GM10248 (cell line): ENCODE measurements at regions of chr9 and their contacts with region 1.

Region 1: GRCh38 chr9:5437254-5438216 is at the start of gene PLGRKT:
- DNase-seq: peak; percentile 90
- CTCF ChIP-seq: peak; percentile 17

Region 2: DNA sequence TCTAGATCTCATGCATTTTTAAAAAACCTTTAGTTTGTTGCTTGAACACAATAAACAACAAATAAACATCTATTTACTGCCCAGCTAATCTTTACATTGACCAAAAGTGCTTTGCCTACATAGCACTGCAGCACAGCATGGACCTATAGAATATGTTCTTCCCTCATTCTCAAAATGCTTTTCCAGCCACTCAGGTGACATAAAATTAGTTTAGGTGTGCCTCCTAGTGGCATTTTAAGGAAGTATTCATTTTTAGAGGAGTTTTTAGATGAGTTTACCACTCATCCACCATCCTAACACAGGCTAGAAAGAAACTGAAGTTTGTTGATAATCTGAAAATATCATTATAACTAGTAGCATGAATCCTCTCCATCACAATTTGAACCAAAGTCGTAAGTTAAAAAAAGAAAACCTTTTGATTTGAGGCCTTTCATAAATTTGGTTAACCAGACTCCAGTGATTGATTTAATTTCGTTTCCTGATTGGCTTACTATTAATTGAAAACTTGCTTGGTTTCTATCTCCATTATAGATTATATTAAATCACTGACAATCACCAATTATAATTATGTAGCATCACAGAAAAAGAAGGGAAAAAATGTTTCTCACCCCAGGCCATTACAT is 12.4 kb before region 1 on chr9:
- CTCF ChIA-PET with region 1: interaction called, 12 read pairs
- POLR2A ChIA-PET with region 1: no interaction called
- DNase-seq: peak; percentile 32
- CTCF ChIP-seq: peak; percentile 29

Region 3: DNA sequence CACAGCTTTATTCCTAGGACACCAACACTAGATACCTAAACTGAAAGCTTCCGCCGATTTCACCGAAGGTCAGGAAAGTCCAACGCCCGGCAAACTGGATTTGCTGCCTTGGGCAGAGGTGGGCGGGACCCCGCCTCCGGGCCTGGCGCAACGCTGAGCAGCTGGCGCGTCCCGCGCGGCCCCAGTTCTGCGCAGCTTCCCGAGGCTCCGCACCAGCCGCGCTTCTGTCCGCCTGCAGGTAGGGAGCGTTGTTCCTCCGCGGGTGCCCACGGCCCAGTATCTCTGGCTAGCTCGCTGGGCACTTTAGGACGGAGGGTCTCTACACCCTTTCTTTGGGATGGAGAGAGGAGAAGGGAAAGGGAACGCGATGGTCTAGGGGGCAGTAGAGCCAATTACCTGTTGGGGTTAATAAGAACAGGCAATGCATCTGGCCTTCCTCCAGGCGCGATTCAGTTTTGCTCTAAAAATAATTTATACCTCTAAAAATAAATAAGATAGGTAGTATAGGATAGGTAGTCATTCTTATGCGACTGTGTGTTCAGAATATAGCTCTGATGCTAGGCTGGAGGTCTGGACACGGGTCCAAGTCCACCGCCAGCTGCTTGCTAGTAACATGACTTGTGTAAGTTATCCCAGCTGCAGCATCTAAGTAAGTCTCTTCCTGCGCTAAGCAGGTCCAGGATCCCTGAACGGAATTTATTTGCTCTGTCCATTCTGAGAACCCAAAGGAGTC is 13.0 kb after region 1 on chr9 and contains the start of gene CD274:
- CTCF ChIA-PET with region 1: interaction called, 39 read pairs
- POLR2A ChIA-PET with region 1: interaction called, 27 read pairs
- DNase-seq: peak; percentile 75
- CTCF ChIP-seq: peak; percentile 81